CD8-positive, alpha-beta T cell (primary cell): ENCODE measurements at regions of chr2 and their contacts with region 1.

Region 1: DNA sequence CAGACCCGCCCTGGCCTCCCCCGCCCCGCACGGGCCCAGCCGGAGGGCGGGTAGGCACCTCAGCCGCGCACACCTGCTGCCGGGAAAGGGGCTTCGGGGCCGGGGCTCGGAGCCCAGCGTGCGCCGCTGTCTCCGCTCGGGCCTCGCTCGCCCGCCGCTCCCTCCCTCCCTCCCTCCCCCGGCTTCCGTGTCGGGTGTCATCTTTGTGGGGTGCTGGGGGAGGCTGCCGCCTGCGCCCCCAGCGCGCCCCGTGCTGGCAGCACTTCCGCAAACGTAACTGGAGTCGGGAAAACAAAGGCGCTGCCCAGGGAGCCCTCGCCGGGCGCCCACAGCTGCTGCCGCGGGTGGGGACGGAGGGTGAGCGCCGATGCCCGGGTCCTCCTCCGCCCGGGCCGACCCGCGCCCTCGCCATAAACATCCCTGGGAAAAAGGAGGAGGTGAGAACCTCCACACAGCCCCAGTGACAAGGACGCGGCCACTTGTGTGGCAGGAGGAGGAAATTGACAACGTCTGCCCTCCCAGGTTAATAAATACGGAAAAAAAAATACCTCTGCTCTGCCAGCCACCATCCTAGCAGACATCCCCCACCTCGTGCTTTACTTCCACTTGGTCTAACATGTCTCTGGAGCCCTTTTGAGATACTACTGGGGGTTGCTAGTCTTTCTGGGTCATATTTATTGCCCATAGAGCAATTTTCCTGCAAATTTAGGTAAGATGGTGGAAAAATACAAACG is 550 bp downstream of the MFSD6 start:
- DNase-seq: peak; percentile 62 to 92 (median 80)
- ATAC-seq: peak; percentile 56
- H3K4me3 ChIP-seq: peak overlapping the region; percentile 69 to 89
- H3K4me3 Mint-ChIP-seq: peak overlapping the region; percentile 92
- H3K27ac ChIP-seq: peak overlapping the region; percentile 98 to 99
- H3K27ac Mint-ChIP-seq: peak overlapping the region; percentile 99
- H3K4me1 ChIP-seq: peaks cover 51% of the 10 kb centered on the region
- H3K4me1 Mint-ChIP-seq: peaks cover 45% of the 10 kb centered on the region
- H3K27me3 ChIP-seq: no peaks in the 10 kb centered on the region
- H3K27me3 Mint-ChIP-seq: no peaks in the 10 kb centered on the region
- CTCF ChIP-seq: no peak

Region 2: DNA sequence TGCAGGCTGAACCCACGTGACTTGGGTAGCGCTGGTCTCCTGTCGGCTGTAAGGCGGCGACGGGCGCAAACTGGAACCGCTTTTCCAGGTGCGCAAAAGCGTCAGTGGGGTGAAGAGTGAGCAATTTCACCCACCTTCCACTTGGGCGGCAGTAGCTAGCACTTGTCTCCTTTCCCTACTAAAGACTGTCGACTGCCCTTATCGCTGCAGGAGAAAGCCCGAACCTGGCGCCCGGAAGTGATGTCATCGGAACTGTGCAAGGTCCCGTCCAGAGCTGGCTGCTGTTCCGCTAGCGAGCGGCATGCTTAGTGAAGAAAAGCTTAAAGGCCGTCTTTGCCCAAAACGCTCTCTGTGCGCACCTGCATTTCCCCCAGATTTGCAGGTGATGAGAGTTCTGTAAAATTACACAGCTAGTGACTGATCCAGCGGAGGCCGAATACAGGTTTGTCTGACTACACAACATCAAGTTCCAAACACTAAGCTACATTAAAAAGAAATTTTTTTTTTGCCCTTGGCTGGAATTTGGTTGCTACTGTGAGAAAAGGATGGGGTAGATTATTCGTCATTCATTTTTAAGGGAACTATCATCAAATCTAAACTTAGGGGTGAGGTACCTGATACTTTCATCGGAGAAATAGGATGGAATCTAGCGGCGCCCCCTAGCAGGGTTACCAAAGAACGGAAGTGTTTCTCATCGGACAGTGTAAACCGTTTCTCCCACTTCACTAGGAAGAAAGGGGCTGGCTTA is 646.0 kb before region 1 on chr2 and contains the start of gene OSGEPL1:
- CTCF ChIA-PET with region 1: interaction called, 3 read pairs
- POLR2A ChIA-PET with region 1: interaction called, 6 read pairs
- intact Hi-C with region 1: loop called in 1 of 2 experiments (anchors 1 kb)
- DNase-seq: peak; percentile 84 to 97 (median 94)
- ATAC-seq: peak; percentile 92
- H3K4me3 ChIP-seq: peak within 1 kb of the TSS; percentile 69 to 83
- H3K4me3 Mint-ChIP-seq: peak within 1 kb of the TSS; percentile 97
- H3K27ac ChIP-seq: peak within 1 kb of the TSS; percentile 85 to 88
- H3K27ac Mint-ChIP-seq: peak within 1 kb of the TSS; percentile 98
- H3K4me1 ChIP-seq: peaks cover 8% of the 10 kb centered on the region
- H3K4me1 Mint-ChIP-seq: peaks cover 15% of the 10 kb centered on the region
- H3K27me3 ChIP-seq: no peaks in the 10 kb centered on the region
- H3K27me3 Mint-ChIP-seq: no peaks in the 10 kb centered on the region
- CTCF ChIP-seq: peak; percentile 52
- total RNA-seq, gene OSGEPL1: 3.6 to 3.9 TPM

Region 3: GRCh38 chr2:190180313-190181122 is 228.2 kb before region 1 on chr2:
- CTCF ChIA-PET with region 1: no interaction called
- POLR2A ChIA-PET with region 1: no interaction called
- intact Hi-C with region 1: no loop called
- DNase-seq: peak in 2 of 9 experiments; percentile 9 to 20
- ATAC-seq: peak; percentile 46
- H3K4me3 ChIP-seq: peak overlapping the region in 1 of 2 experiments; percentile 46
- H3K4me3 Mint-ChIP-seq: peak overlapping the region; percentile 70
- H3K27ac ChIP-seq: no peak overlapping the region
- H3K27ac Mint-ChIP-seq: no peak overlapping the region
- H3K4me1 ChIP-seq: peaks cover 12% of the 10 kb centered on the region
- H3K4me1 Mint-ChIP-seq: peaks cover 12% of the 10 kb centered on the region
- H3K27me3 ChIP-seq: peaks cover 0 to 2% of the 10 kb centered on the region in 2 experiments
- H3K27me3 Mint-ChIP-seq: peaks cover 37% of the 10 kb centered on the region
- CTCF ChIP-seq: no peak

Region 4: DNA sequence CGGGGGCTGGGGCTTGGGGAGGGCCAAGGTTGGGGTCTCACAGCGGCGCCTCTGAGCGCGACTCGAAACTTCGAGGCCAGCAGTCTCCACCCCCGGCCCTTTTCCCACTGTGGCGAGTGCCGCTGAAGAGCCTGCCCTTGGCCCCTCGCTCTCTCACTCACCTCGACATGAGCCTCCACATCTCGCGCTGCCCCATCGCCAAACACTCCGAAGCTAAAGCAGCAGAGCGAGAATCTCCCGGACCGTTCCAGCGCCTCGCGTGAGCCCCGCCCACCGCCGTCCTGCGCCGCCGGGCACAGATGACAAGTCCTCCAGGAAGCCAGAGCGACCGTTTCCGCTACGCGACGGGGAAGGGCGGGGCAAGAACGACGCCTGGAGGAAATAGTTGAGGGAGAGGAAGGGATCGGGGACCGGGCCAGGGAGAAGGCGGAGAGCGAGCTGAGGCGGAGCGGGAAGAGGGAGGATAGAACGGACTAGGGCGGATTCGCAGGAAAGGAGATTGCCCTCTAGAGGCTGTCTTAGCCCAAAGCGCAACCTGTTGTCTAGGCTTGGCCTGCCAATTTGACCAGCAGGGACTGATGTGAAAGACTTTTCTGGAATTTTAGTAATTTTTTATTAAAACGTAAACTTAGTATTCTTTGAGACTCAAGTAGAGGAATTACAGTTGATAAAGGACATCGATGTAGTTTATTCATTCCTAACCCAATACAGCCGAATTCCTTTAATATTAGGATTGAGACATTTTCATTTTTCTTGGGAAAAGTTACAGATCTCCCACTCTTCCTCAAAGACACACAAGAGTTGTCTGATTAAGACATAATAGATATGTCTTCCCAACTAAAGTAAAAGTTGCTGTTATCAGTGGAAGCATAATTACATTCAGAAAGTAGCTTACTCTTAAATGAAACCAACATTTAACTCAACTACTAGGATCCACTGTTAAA is 88.9 kb before region 1 on chr2 and contains the start of gene HIBCH:
- CTCF ChIA-PET with region 1: no interaction called
- POLR2A ChIA-PET with region 1: interaction called, 4 read pairs
- intact Hi-C with region 1: loop called in 1 of 2 experiments (anchors 2 kb)
- DNase-seq: peak; percentile 51 to 91 (median 83)
- ATAC-seq: peak; percentile 89
- H3K4me3 ChIP-seq: peak within 1 kb of the TSS; percentile 77 to 94
- H3K4me3 Mint-ChIP-seq: peak within 1 kb of the TSS; percentile 100
- H3K27ac ChIP-seq: peak within 1 kb of the TSS; percentile 66 to 88
- H3K27ac Mint-ChIP-seq: peak within 1 kb of the TSS; percentile 98
- H3K4me1 ChIP-seq: peaks cover 19% of the 10 kb centered on the region
- H3K4me1 Mint-ChIP-seq: peaks cover 50% of the 10 kb centered on the region
- H3K27me3 ChIP-seq: no peaks in the 10 kb centered on the region
- H3K27me3 Mint-ChIP-seq: no peaks in the 10 kb centered on the region
- CTCF ChIP-seq: peak; percentile 70
- total RNA-seq, gene HIBCH: 3.7 to 5.8 TPM

Region 5: GRCh38 chr2:190382851-190383250 is 25.9 kb before region 1 on chr2:
- CTCF ChIA-PET with region 1: interaction called, 4 read pairs
- POLR2A ChIA-PET with region 1: interaction called, 3 read pairs
- intact Hi-C with region 1: loop called in 1 of 2 experiments (anchors 1 kb)
- DNase-seq: peak in 6 of 9 experiments; percentile 15 to 82 (median 30)
- ATAC-seq: peak; percentile 87
- H3K4me3 ChIP-seq: no peak overlapping the region
- H3K4me3 Mint-ChIP-seq: no peak overlapping the region
- H3K27ac ChIP-seq: no peak overlapping the region
- H3K27ac Mint-ChIP-seq: no peak overlapping the region
- H3K4me1 ChIP-seq: no peaks in the 10 kb centered on the region
- H3K4me1 Mint-ChIP-seq: no peaks in the 10 kb centered on the region
- H3K27me3 ChIP-seq: no peaks in the 10 kb centered on the region
- H3K27me3 Mint-ChIP-seq: no peaks in the 10 kb centered on the region
- CTCF ChIP-seq: peak; percentile 66

Region 6: GRCh38 chr2:190511104-190511503 is 102.4 kb after region 1 on chr2:
- CTCF ChIA-PET with region 1: no interaction called
- POLR2A ChIA-PET with region 1: no interaction called
- intact Hi-C with region 1: loop called in 1 of 2 experiments (anchors 5 kb)
- DNase-seq: no peak
- ATAC-seq: no peak
- H3K4me3 ChIP-seq: no peak overlapping the region
- H3K4me3 Mint-ChIP-seq: no peak overlapping the region
- H3K27ac ChIP-seq: no peak overlapping the region
- H3K27ac Mint-ChIP-seq: peak overlapping the region; percentile 62
- H3K4me1 ChIP-seq: peaks cover 9% of the 10 kb centered on the region
- H3K4me1 Mint-ChIP-seq: peaks cover 21% of the 10 kb centered on the region
- H3K27me3 ChIP-seq: no peaks in the 10 kb centered on the region
- H3K27me3 Mint-ChIP-seq: no peaks in the 10 kb centered on the region
- CTCF ChIP-seq: no peak

Region 7: DNA sequence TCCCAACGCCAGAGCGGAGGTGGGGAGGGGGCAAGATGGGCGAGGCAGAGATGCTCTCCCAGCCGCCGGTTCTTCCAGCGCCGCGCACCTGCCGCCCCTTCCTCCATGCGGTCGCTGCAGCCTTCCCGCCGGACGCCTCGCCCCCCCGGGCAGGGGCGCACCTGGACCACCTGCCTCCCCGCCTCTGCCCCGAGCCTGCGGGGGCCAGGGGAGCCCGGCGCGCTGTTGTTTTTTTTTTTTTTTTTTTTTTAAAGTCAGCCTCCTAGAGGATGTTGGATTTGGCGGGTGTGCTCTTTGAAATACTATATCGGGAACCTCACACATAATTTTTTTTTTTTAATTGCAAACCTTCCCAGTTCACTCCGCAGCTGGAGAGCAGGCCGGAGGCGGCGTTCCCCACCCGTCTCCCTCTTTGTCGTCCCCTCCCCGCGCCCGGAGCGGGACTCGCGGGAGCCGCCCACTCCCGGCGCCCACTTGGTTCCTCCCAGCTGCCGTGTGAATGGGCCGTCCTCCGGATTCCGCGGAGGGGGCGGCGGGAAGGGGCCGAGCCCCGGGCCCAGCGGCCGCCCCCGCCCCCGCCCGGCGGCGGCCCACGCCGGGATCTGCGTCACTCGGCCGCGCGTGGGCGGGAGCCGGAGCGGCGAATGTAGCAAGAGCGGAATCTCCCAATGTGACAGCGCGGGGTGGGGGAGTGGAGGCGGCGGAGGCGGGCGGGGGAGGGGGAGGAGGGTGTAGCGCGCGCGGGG is 239.8 kb after region 1 on chr2:
- CTCF ChIA-PET with region 1: no interaction called
- POLR2A ChIA-PET with region 1: interaction called, 8 read pairs
- intact Hi-C with region 1: loop called (anchors 1 to 2 kb)
- DNase-seq: peak; percentile 80 to 97 (median 88)
- ATAC-seq: peak; percentile 81
- H3K4me3 ChIP-seq: peak overlapping the region; percentile 58 to 63
- H3K4me3 Mint-ChIP-seq: peak overlapping the region; percentile 84
- H3K27ac ChIP-seq: peak overlapping the region; percentile 63 to 84
- H3K27ac Mint-ChIP-seq: peak overlapping the region; percentile 88
- H3K4me1 ChIP-seq: peaks cover 26% of the 10 kb centered on the region
- H3K4me1 Mint-ChIP-seq: peaks cover 44% of the 10 kb centered on the region
- H3K27me3 ChIP-seq: no peaks in the 10 kb centered on the region
- H3K27me3 Mint-ChIP-seq: no peaks in the 10 kb centered on the region
- CTCF ChIP-seq: no peak

Region 8: DNA sequence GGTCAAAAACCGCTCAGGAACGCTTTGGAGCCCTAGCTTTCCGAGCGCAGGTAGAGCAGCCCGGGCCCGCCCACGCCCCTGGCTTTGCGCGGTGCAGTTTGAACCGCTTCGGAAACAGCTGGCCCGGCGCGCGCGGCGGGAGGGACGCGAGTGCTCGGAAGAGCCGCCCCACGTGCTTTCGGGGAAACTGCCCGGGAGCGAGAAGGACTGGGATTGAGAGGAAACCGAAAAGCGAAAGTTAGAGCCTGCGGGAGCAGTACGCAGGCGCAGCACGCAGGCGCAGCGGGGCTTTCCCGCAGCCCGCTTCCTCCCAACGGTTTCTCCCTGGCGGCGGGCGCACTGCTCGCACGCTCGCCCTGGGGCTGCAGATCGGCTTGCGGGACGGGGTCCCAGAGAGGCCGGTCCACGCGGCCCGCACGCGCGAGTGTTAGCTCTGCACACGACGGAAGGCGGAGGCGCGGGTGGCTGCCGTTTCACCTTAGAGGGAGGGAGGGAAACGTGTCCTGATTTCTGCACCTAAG is 611.6 kb after region 1 on chr2:
- CTCF ChIA-PET with region 1: no interaction called
- POLR2A ChIA-PET with region 1: no interaction called
- intact Hi-C with region 1: loop called (anchors 5 kb)
- DNase-seq: peak; percentile 82 to 98 (median 93)
- ATAC-seq: peak; percentile 72
- H3K4me3 ChIP-seq: peak overlapping the region; percentile 73 to 82
- H3K4me3 Mint-ChIP-seq: no peak overlapping the region
- H3K27ac ChIP-seq: peak overlapping the region; percentile 62 to 86
- H3K27ac Mint-ChIP-seq: no peak overlapping the region
- H3K4me1 ChIP-seq: peaks cover 52% of the 10 kb centered on the region
- H3K4me1 Mint-ChIP-seq: peaks cover 28% of the 10 kb centered on the region
- H3K27me3 ChIP-seq: no peaks in the 10 kb centered on the region
- H3K27me3 Mint-ChIP-seq: no peaks in the 10 kb centered on the region
- CTCF ChIP-seq: no peak